CD8-positive, alpha-beta memory T cell (primary cell): ENCODE measurements at regions of chr17 and their contacts with region 1.

Region 1: GRCh38 chr17:28967221-28968140 is 16.2 kb upstream of the PHF12 start:
- DNase-seq: peak in 1 of 5 donors; percentile 18
- H3K4me3 ChIP-seq: no peak overlapping the region
- H3K4me3 Mint-ChIP-seq: no peak overlapping the region
- H3K27ac ChIP-seq: no peak overlapping the region
- H3K27ac Mint-ChIP-seq: no peak overlapping the region
- H3K4me1 ChIP-seq: no peaks in the 10 kb centered on the region
- H3K4me1 Mint-ChIP-seq: peaks cover 0 to 3% (median 0%) of the 10 kb centered on the region in 3 donors
- H3K27me3 ChIP-seq: no peaks in the 10 kb centered on the region
- H3K27me3 Mint-ChIP-seq: peaks cover 8 to 26% of the 10 kb centered on the region in 2 donors

Region 2: GRCh38 chr17:28878981-28879380 is 88.5 kb before region 1 on chr17:
- CTCF ChIA-PET with region 1: no interaction called
- POLR2A ChIA-PET with region 1: no interaction called
- DNase-seq: no peak
- H3K4me3 ChIP-seq: no peak overlapping the region
- H3K4me3 Mint-ChIP-seq: no peak overlapping the region
- H3K27ac ChIP-seq: no peak overlapping the region
- H3K27ac Mint-ChIP-seq: peak overlapping the region in 3 of 8 donors; percentile 7 to 76 (median 37)
- H3K4me1 ChIP-seq: no peaks in the 10 kb centered on the region
- H3K4me1 Mint-ChIP-seq: peaks cover 0 to 4% (median under 1%) of the 10 kb centered on the region in 3 donors
- H3K27me3 ChIP-seq: no peaks in the 10 kb centered on the region
- H3K27me3 Mint-ChIP-seq: peaks cover 0 to 1% of the 10 kb centered on the region in 2 donors

Region 3: GRCh38 chr17:28982131-28982951 is 14.9 kb after region 1 on chr17:
- CTCF ChIA-PET with region 1: interaction called, 11 read pairs
- POLR2A ChIA-PET with region 1: no interaction called
- DNase-seq: peak; percentile 53 to 88 (median 77)
- H3K4me3 ChIP-seq: no peak overlapping the region
- H3K4me3 Mint-ChIP-seq: peak overlapping the region; percentile 3 to 74 (median 51)
- H3K27ac ChIP-seq: peak overlapping the region; percentile 64
- H3K27ac Mint-ChIP-seq: peak overlapping the region; percentile 90 to 99 (median 98)
- H3K4me1 ChIP-seq: peaks cover 24% of the 10 kb centered on the region
- H3K4me1 Mint-ChIP-seq: peaks cover 19 to 23% (median 21%) of the 10 kb centered on the region in 3 donors
- H3K27me3 ChIP-seq: no peaks in the 10 kb centered on the region
- H3K27me3 Mint-ChIP-seq: peaks cover 0 to 2% of the 10 kb centered on the region in 2 donors

Region 4: GRCh38 chr17:28996554-28997096 is 29.1 kb after region 1 on chr17:
- CTCF ChIA-PET with region 1: interaction called, 11 read pairs
- POLR2A ChIA-PET with region 1: no interaction called
- DNase-seq: no peak
- H3K4me3 ChIP-seq: no peak overlapping the region
- H3K4me3 Mint-ChIP-seq: no peak overlapping the region
- H3K27ac ChIP-seq: no peak overlapping the region
- H3K27ac Mint-ChIP-seq: peak overlapping the region in 1 of 8 donors; percentile 78
- H3K4me1 ChIP-seq: no peaks in the 10 kb centered on the region
- H3K4me1 Mint-ChIP-seq: no peaks in the 10 kb centered on the region
- H3K27me3 ChIP-seq: no peaks in the 10 kb centered on the region
- H3K27me3 Mint-ChIP-seq: peaks cover 20 to 38% of the 10 kb centered on the region in 2 donors

Region 5: GRCh38 chr17:29084541-29085146 is 117.2 kb after region 1 on chr17:
- CTCF ChIA-PET with region 1: interaction called, 12 read pairs
- POLR2A ChIA-PET with region 1: no interaction called
- DNase-seq: no peak
- H3K4me3 ChIP-seq: no peak overlapping the region
- H3K4me3 Mint-ChIP-seq: no peak overlapping the region
- H3K27ac ChIP-seq: no peak overlapping the region
- H3K27ac Mint-ChIP-seq: no peak overlapping the region
- H3K4me1 ChIP-seq: no peaks in the 10 kb centered on the region
- H3K4me1 Mint-ChIP-seq: no peaks in the 10 kb centered on the region
- H3K27me3 ChIP-seq: no peaks in the 10 kb centered on the region
- H3K27me3 Mint-ChIP-seq: peaks cover 0 to 1% of the 10 kb centered on the region in 2 donors

Region 6: GRCh38 chr17:29090750-29091603 is 123.5 kb after region 1 on chr17:
- CTCF ChIA-PET with region 1: interaction called, 12 read pairs
- POLR2A ChIA-PET with region 1: no interaction called
- DNase-seq: no peak
- H3K4me3 ChIP-seq: no peak overlapping the region
- H3K4me3 Mint-ChIP-seq: no peak overlapping the region
- H3K27ac ChIP-seq: no peak overlapping the region
- H3K27ac Mint-ChIP-seq: no peak overlapping the region
- H3K4me1 ChIP-seq: no peaks in the 10 kb centered on the region
- H3K4me1 Mint-ChIP-seq: no peaks in the 10 kb centered on the region
- H3K27me3 ChIP-seq: no peaks in the 10 kb centered on the region
- H3K27me3 Mint-ChIP-seq: peaks cover 0 to 1% of the 10 kb centered on the region in 2 donors

Region 7: DNA sequence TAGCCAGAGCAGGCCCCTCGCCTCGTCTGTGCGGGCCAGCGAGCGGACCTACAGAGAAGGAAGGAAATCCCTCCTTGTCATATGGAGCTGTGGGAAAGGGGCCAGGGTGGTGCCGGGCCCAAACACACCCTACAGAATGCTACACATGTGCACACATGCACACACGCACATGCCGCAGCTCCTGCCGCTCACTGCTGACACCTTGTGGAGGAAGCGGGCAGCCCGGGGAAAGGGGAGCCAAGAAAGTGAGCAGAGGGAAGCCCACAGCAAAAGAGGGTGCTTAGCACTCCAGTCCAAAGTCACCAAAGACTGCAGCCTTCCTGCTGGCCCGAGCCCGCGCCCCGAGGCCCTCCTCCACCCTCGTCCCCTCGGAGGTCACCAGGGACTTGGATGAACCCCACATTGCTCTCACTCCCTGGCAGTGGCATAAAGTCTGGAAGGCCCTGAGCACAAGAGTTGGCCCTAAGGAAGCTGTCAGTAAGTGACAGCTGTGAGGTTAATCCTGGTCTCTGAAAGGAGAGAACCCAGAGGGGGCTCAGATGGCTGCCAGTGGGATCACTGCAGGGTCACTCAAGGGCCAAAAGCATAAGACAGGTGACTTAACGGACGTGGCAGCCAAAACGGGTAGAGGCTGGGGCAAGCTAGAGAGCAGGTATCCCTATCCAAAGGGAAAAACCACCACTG is 144.5 kb after region 1 on chr17:
- CTCF ChIA-PET with region 1: interaction called, 136 read pairs
- POLR2A ChIA-PET with region 1: interaction called, 12 read pairs
- DNase-seq: peak; percentile 33 to 71 (median 48)
- H3K4me3 ChIP-seq: no peak overlapping the region
- H3K4me3 Mint-ChIP-seq: no peak overlapping the region
- H3K27ac ChIP-seq: no peak overlapping the region
- H3K27ac Mint-ChIP-seq: peak overlapping the region in 1 of 8 donors; percentile 44
- H3K4me1 ChIP-seq: no peaks in the 10 kb centered on the region
- H3K4me1 Mint-ChIP-seq: peaks cover 2 to 5% (median 3%) of the 10 kb centered on the region in 3 donors
- H3K27me3 ChIP-seq: no peaks in the 10 kb centered on the region
- H3K27me3 Mint-ChIP-seq: no peaks in the 10 kb centered on the region